ENCODE measurements at regions of chr16 and their contacts with region 1.

Region 1: GRCh38 chr16:57826706-57827625 is 24.7 kb upstream of the KIFC3 start:
- DNase-seq: no peak

Region 2: DNA sequence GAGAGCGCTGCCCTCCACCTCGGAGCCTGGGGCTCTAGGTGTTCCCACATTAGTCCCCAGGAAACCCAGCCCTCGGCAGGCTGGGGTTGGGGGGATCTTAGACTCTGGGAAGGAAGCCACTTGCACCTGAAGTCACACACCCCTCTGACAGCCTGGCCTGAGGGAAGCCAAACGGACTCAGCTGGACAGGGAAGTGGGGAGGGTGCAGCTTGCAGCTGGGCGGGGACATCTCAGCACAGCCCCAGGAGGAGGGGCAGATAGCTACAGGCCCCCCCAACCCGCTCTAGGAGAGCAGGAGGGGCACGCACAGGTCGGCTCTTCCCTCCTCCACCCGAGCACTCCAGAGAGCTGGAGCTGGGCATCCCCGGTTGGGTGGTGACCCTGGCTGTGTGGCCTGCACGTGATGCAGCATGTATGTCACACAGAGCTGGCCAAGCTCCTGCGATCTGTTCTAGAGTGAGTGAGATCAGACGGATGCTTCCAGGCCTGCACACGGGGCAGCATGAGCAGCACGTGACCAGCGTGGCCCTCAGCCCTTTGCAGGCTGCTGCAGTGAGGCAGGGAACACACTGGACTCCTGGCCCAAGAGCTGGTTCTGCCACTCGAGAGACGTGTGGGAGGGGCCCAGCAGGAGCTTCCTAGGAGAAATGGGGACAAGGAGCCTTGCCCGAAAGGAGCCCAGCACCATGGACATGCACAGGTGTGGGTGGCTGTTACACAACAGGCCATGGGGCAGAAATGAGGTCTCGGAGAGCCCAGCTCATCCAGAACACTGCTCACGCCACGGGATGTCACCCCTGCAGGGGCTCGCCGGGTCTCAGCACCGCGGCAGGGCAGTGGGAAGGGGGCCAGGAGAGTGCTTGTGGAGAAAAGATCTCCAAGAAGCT is 40.1 kb before region 1 on chr16:
- intact Hi-C with region 1: loop called (anchors 5 kb)
- DNase-seq: peak; percentile 92

Region 3: GRCh38 chr16:57863434-57864160 is 36.6 kb after region 1 on chr16:
- intact Hi-C with region 1: loop called (anchors 5 kb)
- DNase-seq: no peak